AG04449 (cell line): ENCODE measurements at regions of chr2 and their contacts with region 1.

Region 1: GRCh38 chr2:43226558-43226954 is at the start of gene ZFP36L2:
- DNase-seq: no peak
- H3K4me3 ChIP-seq: peak within 1 kb of the TSS; percentile 86
- CTCF ChIP-seq: peak; percentile 2

Region 2: DNA sequence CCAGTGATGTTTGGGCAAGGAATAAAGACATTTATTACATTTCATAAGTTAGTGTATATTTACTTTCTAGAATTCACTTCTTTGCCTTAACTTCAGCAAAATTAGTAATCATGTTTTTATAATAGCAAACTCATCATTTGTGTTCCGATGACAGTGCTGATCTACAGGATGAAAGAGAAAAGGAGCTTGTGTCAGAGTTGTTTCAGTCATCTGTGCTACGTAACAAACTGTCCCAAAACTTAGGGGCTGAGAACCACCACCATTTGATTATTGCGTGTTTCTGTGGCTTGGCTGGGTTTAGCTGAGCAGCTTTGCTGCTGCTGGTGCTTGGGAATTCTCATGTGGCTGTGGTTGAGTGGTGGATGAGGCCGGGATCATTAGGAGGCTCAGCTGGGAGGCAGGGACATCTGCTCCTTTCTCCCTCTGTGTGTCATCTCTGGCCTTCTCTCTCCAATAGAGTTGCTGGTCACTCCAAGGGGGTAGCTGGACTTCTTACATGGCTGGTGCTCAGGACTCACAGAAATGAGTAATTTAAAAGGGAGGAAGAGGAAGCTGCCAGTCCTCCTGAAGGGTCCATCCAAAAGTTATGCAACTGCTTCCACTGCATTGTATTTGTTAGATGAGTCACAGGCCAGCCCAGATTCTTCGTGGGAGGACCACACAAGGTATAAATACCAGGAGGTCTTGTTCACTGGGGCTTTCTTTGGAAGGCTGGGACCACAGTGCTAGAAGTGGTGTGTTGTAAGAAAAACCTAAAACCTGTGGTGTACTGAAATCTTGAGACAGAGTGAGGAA is 390.8 kb before region 1 on chr2:
- CTCF ChIA-PET with region 1: interaction called, 111 read pairs
- POLR2A ChIA-PET with region 1: interaction called, 4 read pairs
- DNase-seq: peak; percentile 94
- H3K4me3 ChIP-seq: no peak overlapping the region
- CTCF ChIP-seq: no peak

Region 3: DNA sequence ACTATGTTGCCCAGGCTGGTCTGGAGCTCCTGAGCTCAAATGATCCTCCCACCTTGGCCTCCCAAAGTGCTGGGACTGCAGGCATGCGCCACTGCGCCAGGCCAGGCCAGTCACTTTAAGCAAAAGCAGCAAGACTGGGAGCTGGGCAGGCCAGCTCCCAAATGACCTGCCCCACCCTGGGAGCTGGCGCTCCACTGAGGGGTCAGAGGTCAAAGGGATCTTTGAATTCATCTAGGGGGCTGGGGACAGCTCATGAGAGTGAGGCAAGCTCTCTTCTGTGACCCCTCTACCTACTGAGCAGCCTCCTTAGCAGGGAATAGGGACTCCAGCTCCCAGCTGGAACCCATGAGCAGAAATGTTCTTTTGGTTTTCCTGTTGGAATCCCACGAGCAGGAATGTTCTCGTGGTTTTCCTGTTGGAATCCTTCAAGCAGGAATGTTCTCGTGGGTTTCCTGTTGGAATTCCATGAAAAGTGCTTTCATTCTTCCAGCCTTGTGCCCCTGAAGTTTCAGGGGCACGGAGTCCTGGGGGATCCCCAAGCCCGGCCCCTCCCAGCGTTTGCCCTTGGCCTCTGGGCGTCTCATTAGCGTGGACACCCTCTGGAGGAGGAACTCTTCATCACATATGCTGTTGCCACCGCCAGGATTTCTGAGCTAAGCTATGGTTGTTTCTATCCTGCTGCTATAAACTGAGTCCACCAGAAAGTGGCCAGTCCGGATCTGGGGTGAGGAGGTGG is 272.2 kb before region 1 on chr2:
- CTCF ChIA-PET with region 1: interaction called, 37 read pairs
- POLR2A ChIA-PET with region 1: interaction called, 6 read pairs
- DNase-seq: no peak
- H3K4me3 ChIP-seq: no peak overlapping the region
- CTCF ChIP-seq: no peak

Region 4: DNA sequence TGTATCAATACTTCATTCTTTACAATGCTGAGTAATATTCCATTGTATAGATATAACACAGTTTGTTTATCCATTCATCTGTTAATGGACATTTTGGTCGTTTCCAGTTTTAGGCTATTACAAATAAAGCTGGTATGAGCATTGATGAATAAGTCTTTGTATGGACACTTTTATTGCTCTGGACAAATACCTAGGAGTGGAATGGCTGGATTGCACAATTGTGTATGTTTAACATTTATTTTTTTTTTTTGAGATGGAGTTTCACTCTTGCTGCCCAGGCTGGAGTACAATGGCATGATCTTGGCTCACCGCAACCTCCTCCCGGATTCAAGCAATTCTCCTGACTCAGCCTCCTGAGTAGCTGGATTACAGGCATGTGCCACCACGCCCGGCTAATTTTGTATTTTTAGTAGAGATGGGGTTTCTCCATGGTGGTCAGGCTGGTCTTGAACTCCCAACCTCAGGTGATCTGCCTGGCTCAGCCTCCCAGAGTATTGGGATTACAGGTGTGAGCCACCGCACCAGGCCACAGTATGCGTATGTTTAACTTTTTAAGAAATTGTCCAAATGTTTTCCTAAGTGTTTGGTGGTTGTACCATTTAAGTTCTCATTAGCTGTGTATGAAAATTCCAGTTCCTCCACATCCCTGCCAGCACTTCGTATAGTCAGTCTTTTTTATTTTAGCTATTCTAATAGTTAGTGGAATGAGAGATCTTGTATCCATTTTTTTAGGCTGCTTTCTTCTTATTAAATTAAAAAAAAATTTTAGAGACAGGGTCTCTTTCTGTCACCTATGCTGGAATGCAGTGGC is 239.2 kb before region 1 on chr2:
- CTCF ChIA-PET with region 1: interaction called, 36 read pairs
- POLR2A ChIA-PET with region 1: interaction called, 9 read pairs
- DNase-seq: peak; percentile 62
- H3K4me3 ChIP-seq: no peak overlapping the region
- CTCF ChIP-seq: no peak

Region 5: DNA sequence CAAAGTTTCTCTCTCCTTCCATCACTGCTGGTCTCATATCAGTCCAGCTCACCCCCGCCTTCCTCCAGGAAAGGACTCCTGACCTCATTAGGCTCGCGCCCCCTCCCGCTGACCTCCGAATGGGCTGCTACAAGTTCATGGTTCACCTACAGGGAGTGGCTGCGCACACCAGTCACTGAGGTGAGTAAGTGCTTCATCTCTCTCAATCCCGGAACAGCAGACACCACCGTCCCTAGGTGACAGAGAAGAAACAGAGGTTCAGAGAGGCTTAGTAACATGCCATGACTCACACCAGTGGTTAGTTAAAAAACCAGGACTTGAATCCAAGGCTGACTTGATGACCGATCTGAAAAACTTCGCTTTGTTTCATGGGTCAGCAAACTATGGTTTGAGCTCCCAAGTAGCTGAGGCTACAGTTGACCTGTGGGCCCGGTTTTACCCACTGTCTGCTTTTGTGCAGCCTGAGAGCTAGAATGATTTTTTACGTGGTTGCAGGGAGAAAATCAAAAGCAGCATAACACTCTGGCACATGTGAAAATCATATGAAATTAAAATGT is 42.1 kb before region 1 on chr2:
- CTCF ChIA-PET with region 1: no interaction called
- POLR2A ChIA-PET with region 1: no interaction called
- DNase-seq: no peak
- H3K4me3 ChIP-seq: no peak overlapping the region
- CTCF ChIP-seq: no peak

Region 6: DNA sequence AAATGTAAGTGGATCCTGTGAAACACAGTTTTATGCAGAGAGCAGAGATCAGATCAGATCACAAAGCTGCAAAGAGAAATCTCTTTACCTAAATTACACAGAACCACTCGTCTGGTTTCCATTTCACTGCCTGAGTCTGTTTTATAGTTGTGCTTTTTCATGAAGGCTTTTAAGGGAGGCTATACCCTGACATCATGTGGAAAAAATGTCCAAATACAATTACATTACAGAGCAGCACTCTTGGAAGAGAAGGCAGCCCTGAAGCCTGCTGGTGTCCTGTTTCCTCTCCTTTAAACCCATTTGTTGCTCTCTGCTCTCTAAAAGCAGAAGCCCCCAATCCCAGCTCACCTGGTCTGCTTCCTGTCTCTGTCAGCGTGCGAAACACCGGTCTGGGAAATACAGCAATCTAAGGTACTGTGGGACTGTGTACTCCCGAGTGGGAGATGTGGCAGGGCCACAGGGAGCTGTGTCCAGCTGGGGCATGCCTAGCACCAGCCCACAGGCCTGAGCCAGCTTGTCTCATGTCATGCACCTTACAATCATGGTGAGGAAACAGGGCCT is 24.7 kb after region 1 on chr2:
- CTCF ChIA-PET with region 1: interaction called, 13 read pairs
- POLR2A ChIA-PET with region 1: interaction called, 4 read pairs
- DNase-seq: peak; percentile 45
- H3K4me3 ChIP-seq: no peak overlapping the region; the same call in 1 of the 2 replicates
- CTCF ChIP-seq: no peak

Region 7: DNA sequence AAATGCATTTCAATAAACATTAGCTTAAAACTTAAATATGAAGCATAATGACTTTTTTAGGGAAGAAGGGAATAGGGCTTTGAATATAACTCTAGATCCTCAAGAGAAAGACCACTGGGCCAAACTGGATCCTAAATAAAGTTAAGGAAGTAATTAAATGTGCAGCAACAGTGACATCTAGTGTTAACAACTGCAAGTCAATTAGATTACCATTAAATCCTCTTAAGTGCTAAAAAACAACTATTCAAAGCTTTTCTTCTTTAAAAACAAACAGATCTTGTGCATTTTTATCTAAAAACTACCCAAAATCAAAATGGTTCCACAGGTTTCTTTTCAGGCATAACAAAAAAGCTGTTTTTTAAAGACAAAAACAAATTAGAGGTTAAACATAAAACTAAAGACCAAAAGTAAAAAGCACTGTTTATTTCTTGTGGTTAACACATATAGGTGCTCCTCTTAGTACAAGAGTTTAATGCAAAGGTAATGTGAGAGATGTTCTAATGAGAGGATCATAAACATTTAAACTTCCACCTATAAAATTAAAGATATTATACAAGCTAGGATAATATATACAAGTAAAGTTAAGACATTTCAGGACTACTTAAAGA is 257.9 kb after region 1 on chr2:
- CTCF ChIA-PET with region 1: interaction called, 92 read pairs
- POLR2A ChIA-PET with region 1: interaction called, 7 read pairs
- DNase-seq: peak; percentile 37
- H3K4me3 ChIP-seq: no peak overlapping the region
- CTCF ChIP-seq: peak; percentile 40